ENCODE measurements at regions of chr6 and their contacts with region 1.

Region 1: GRCh38 chr6:134416418-134417154 is 98.7 kb upstream of the SGK1 start:
- H3K4me3 Mint-ChIP-seq: no peak overlapping the region
- H3K27ac Mint-ChIP-seq: no peak overlapping the region
- H3K4me1 Mint-ChIP-seq: peaks cover 50% of the 10 kb centered on the region
- H3K27me3 Mint-ChIP-seq: peaks cover 3% of the 10 kb centered on the region

Region 2: DNA sequence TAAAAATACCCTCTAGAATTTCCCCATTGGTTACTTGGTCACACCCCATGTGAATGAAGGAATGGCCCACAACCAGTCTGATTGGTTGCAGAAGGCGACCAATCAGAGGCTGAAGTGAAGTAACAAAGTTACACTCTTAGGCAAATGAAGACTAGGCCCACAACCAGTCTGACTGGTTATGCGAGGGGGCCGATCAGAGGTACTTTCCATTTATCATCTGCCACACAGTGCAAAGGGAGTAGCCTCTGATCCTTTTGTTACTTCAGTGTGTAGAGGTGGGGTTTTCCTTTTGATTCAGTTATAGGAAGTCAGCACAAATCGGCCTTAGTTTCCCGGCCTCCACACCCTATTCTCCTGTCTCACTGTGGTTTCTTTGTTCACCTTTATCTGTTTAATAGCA is 37.5 kb before region 1 on chr6:
- intact Hi-C with region 1: loop called (anchors 5 kb)
- H3K4me3 Mint-ChIP-seq: no peak overlapping the region
- H3K27ac Mint-ChIP-seq: no peak overlapping the region
- H3K4me1 Mint-ChIP-seq: peaks cover 48% of the 10 kb centered on the region
- H3K27me3 Mint-ChIP-seq: no peaks in the 10 kb centered on the region

Region 3: DNA sequence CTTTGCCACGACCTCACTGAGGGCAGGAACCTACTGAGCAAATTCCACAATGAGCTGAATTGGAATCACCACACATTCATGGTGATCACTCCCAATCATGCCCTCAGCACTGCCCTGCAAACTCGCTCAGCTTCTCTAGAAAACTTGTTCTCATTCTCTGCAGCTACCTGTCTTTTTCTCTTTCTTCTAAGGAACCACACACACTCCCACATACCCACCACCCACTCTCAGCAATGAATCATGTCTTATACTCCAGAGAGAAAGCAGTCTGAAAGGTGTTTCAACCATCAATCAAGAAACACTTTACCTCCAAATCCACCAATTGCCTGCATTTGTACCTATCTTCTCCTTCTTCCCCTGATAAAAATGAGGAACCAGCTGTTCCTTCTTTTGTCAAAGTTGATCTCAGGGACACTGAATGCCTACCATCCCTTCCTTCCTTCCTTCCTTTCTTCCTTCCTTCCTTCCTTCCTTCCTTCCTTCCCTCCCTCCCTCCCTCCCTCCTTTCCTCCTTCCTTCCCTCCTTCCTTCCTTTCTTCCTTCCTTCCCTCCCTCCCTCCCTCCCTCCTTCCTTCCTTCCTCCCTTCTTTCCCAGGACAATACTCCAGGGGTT is 14.1 kb before region 1 on chr6:
- intact Hi-C with region 1: loop called (anchors 1 kb)
- H3K4me3 Mint-ChIP-seq: no peak overlapping the region
- H3K27ac Mint-ChIP-seq: no peak overlapping the region
- H3K4me1 Mint-ChIP-seq: peaks cover 29% of the 10 kb centered on the region
- H3K27me3 Mint-ChIP-seq: no peaks in the 10 kb centered on the region

Measured in dendritic cell treated with granulocyte-macrophage colony-stimulating factor and Interleukin-4, amounts not matched to agents 40 ng/mL and 50 ng/mL, for 4 days (primary cell).